ENCODE measurements at regions of chr7 and their contacts with region 1.

Region 1: DNA sequence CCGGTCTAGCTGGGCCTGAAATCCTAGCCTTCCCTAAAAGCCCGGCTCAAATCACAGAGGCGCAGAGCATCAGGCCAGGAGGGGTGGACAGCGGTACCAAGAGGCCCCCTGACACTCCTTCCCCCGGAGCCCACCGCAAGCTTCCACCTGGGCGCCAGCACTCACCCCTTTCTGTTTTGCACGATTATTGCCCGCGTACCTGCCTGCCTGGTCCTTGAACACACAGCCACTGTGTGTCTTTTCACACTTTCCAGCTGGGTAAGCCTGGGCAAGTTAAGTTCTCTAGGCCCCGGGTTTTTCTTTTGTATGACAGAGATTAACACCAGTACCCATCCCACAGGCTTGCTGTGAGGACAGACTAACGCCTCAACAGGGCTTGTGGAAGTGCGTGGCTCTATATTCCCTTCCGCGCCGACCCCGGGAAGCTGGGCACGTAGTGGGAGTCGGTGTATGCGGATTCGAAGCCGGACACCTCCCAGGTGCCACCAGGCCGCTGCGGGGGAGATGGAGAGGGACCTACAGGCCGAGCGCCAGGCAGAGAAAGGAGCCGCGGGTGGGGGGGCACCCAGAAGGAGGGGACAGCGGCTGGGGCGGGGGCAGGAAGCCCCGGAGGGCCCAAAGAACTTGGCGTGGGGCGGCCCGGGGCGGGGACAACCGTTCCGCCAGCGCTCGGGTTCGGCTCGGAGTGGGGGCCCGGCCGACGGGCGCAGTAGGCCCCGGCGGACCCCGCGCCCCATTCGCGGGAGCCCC is 792 bp downstream of the ZNF746 start:
- DNase-seq: peak in 1 of 2 experiments; percentile 55
- H3K4me3 ChIP-seq: peak overlapping the region; percentile 39 to 82 (median 67)
- H3K27ac ChIP-seq: no peak overlapping the region
- H3K4me1 ChIP-seq: no peaks in the 10 kb centered on the region; a peak in 2 of 7 replicates
- H3K27me3 ChIP-seq: peaks cover 0 to 3% (median under 1%) of the 10 kb centered on the region in 4 experiments; a peak in 2 of 7 replicates
- CTCF ChIP-seq: no peak
- EP300 ChIP-seq: no peak
- POLR2A ChIP-seq: no peak
- RAD21 ChIP-seq: no peak

Region 2: GRCh38 chr7:149474309-149475114 is 22.3 kb before region 1 on chr7:
- CTCF ChIA-PET with region 1: interaction called, 12 read pairs
- POLR2A ChIA-PET with region 1: no interaction called
- DNase-seq: no peak
- H3K4me3 ChIP-seq: no peak overlapping the region
- H3K27ac ChIP-seq: no peak overlapping the region
- H3K4me1 ChIP-seq: peaks cover 0 to 11% (median 8%) of the 10 kb centered on the region in 4 experiments; a peak in 6 of 7 replicates
- H3K27me3 ChIP-seq: no peaks in the 10 kb centered on the region
- CTCF ChIP-seq: peak; percentile 21 to 39 (median 35)
- EP300 ChIP-seq: no peak
- POLR2A ChIP-seq: no peak
- RAD21 ChIP-seq: peak; percentile 2 to 39; a peak in 2 of 4 replicates

Region 3: GRCh38 chr7:149598721-149599306 is 102.0 kb after region 1 on chr7:
- CTCF ChIA-PET with region 1: interaction called, 10 read pairs
- POLR2A ChIA-PET with region 1: no interaction called
- DNase-seq: peak in 1 of 2 experiments; percentile 56
- H3K4me3 ChIP-seq: no peak overlapping the region
- H3K27ac ChIP-seq: no peak overlapping the region
- H3K4me1 ChIP-seq: no peaks in the 10 kb centered on the region
- H3K27me3 ChIP-seq: no peaks in the 10 kb centered on the region
- CTCF ChIP-seq: peak; percentile 56 to 75 (median 70)
- EP300 ChIP-seq: no peak
- POLR2A ChIP-seq: no peak
- RAD21 ChIP-seq: peak; percentile 74 to 81

Region 4: GRCh38 chr7:149624419-149625339 is 127.9 kb after region 1 on chr7:
- CTCF ChIA-PET with region 1: interaction called, 12 read pairs
- POLR2A ChIA-PET with region 1: no interaction called
- DNase-seq: peak; percentile 72 to 99
- H3K4me3 ChIP-seq: peak overlapping the region; percentile 70 to 95 (median 75)
- H3K27ac ChIP-seq: no peak overlapping the region
- H3K4me1 ChIP-seq: peaks cover 0 to 2% (median 0%) of the 10 kb centered on the region in 4 experiments; a peak in 3 of 7 replicates
- H3K27me3 ChIP-seq: no peaks in the 10 kb centered on the region
- CTCF ChIP-seq: peak; percentile 84 to 89 (median 87)
- EP300 ChIP-seq: no peak
- POLR2A ChIP-seq: peak in 1 of 2 experiments; percentile 79; a peak in 2 of 3 replicates
- RAD21 ChIP-seq: peak; percentile 7 to 43; a peak in 2 of 4 replicates

Measured in H1 (cell line).